Tibial artery (tissue), 4 donors: ENCODE measurements at regions of chr4 and their contacts with region 1.

Region 1: DNA sequence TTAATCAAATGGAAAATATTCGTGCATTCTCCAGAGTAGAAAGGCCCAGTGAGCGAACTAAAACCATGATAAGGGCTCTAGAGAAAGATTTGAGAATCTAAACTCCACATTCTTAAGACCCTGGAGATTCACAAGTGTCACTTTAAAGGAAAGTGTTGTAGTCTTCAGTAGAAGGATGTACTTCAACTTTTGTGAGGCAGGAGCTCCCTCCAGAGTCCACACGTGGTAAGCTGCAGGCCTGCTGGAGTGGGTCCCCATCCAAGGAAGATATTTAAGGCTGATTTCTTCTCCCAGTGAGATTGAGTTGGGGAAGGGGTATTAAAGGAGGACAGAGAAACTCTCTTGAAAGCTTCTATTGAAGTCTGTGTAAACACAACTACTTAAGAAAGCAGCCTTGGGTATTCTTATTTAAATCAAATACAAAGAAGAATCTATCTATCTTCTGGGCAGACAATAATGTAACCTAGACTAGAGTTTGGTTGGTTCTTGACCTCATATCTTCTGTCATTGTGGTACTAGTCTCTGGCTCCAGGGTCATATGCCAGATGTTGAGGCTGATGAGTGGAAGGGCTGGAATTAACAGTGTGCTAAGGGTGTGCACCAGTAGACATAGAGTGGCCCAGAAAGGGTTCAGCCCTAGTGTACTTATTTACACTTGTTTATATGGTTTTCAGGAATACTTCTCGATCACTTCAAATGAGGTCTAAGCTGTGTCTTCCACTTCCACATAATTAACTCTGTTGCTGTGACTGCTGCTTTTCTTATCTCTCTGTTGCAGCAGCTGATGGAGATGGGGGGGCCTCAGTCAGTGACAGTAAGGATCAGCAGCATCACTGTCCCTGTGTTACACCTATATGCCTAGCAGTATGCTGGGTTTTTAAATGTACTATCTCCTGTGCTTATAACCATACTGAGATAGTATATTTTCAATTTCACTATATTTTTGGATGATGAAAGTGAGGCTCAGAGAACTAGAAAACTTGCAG is 76.1 kb downstream of the HMGB2 start:
- DNase-seq: peak; percentile 48 to 72
- H3K4me3 ChIP-seq: no peak overlapping the region
- H3K27ac ChIP-seq: no peak overlapping the region
- H3K4me1 ChIP-seq: no peaks in the 10 kb centered on the region
- H3K27me3 ChIP-seq: no peaks in the 10 kb centered on the region
- CTCF ChIP-seq: peak; percentile 63 to 69

Region 2: GRCh38 chr4:173025131-173025530 is 232.9 kb before region 1 on chr4:
- intact Hi-C with region 1: loop called (anchors 5 kb)
- DNase-seq: peak in 1 of 2 donors; percentile 35
- H3K4me3 ChIP-seq: no peak overlapping the region
- H3K27ac ChIP-seq: no peak overlapping the region
- H3K4me1 ChIP-seq: peaks cover 0 to 6% (median 0%) of the 10 kb centered on the region in 4 donors
- H3K27me3 ChIP-seq: no peaks in the 10 kb centered on the region
- CTCF ChIP-seq: peak; percentile 68 to 71

Region 3: DNA sequence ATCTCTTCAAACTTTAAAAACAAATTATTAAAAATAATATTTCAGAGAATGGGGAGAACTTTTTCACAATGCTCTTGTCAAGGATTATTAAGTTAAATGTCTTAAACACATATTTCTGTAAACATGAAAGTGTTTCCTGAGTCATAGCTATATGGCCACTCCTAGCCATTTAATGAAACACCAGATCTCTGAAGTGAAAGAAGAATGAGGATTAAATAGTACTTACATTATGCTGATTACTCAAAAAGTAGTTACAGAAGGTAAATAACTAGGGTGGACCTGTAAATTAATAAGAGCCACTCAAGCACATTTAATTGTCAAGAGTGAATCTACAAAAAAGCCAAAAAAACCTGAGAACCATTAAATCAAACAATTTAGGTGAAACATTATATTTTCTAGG is 147.0 kb before region 1 on chr4:
- intact Hi-C with region 1: no loop called
- DNase-seq: no peak
- H3K4me3 ChIP-seq: no peak overlapping the region
- H3K27ac ChIP-seq: no peak overlapping the region
- H3K4me1 ChIP-seq: no peaks in the 10 kb centered on the region
- H3K27me3 ChIP-seq: no peaks in the 10 kb centered on the region
- CTCF ChIP-seq: no peak

Region 4: GRCh38 chr4:173288296-173288695 is 30.3 kb after region 1 on chr4:
- intact Hi-C with region 1: no loop called
- DNase-seq: peak; percentile 69 to 80
- H3K4me3 ChIP-seq: no peak overlapping the region
- H3K27ac ChIP-seq: no peak overlapping the region
- H3K4me1 ChIP-seq: no peaks in the 10 kb centered on the region
- H3K27me3 ChIP-seq: no peaks in the 10 kb centered on the region
- CTCF ChIP-seq: peak; percentile 30 to 42